ENCODE measurements at regions of chr2 and their contacts with region 1.

Region 1: GRCh38 chr2:230225486-230225885 is at the start of gene SP140:
- DNase-seq: peak; percentile 80
- H3K4me3 Mint-ChIP-seq: peak within 1 kb of the TSS; percentile 91
- H3K27ac Mint-ChIP-seq: peak within 1 kb of the TSS; percentile 98
- H3K4me1 Mint-ChIP-seq: peaks cover 63% of the 10 kb centered on the region
- H3K27me3 Mint-ChIP-seq: no peaks in the 10 kb centered on the region
- total RNA-seq, gene SP140: 235 and 243 TPM in 2 replicates

Region 2: DNA sequence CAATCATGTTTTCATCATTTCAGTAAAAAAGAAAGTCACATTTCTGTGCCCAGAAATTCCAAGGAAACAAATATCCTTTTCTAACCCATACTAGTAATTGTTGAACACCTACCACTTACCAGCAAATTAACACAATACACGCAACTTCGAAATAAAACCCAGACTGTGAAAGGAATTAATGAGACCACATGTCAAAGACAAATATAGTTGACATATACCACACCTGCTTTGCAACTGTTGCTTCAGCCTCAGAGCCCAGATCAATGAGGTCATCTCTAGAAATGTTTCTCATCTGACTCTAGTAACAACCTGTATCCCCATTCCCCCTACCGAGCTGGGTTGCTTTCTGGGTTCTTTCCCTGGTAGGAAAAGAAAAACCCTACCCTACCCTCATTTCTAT is 356.3 kb before region 1 on chr2:
- intact Hi-C with region 1: no loop called
- DNase-seq: no peak
- H3K4me3 Mint-ChIP-seq: no peak overlapping the region
- H3K27ac Mint-ChIP-seq: no peak overlapping the region
- H3K4me1 Mint-ChIP-seq: peaks cover 42% of the 10 kb centered on the region
- H3K27me3 Mint-ChIP-seq: no peaks in the 10 kb centered on the region

Region 3: GRCh38 chr2:230202430-230203109 is 22.9 kb before region 1 on chr2:
- intact Hi-C with region 1: no loop called
- DNase-seq: no peak
- H3K4me3 Mint-ChIP-seq: no peak overlapping the region
- H3K27ac Mint-ChIP-seq: peak overlapping the region; percentile 15
- H3K4me1 Mint-ChIP-seq: peaks cover 29% of the 10 kb centered on the region
- H3K27me3 Mint-ChIP-seq: no peaks in the 10 kb centered on the region

Region 4: GRCh38 chr2:230244211-230244610 is 18.7 kb after region 1 on chr2:
- intact Hi-C with region 1: no loop called
- DNase-seq: no peak
- H3K4me3 Mint-ChIP-seq: no peak overlapping the region
- H3K27ac Mint-ChIP-seq: no peak overlapping the region
- H3K4me1 Mint-ChIP-seq: peaks cover 7% of the 10 kb centered on the region
- H3K27me3 Mint-ChIP-seq: no peaks in the 10 kb centered on the region

Region 5: DNA sequence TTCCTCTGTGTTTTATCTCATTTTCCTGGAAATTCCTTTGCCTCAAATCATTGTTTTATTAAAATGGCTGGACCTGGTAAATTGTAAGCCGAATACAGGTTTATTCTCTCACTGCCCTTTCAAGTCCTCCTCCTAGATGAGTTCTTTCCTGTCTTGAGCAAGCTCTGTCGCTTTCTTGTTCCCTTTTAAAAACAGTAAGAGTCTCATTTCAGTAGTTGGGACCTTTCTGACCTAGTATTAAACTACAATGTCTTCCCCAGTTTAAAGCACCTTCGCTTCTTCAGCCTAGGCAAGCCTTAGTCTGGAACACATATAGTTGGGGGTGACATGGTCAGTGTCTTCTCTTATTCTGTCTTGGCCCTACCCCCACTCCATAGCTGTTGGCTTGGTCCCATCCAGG is 60.6 kb after region 1 on chr2:
- intact Hi-C with region 1: loop called (anchors 2 kb)
- DNase-seq: no peak
- H3K4me3 Mint-ChIP-seq: no peak overlapping the region
- H3K27ac Mint-ChIP-seq: peak overlapping the region; percentile 6
- H3K4me1 Mint-ChIP-seq: peaks cover 35% of the 10 kb centered on the region
- H3K27me3 Mint-ChIP-seq: no peaks in the 10 kb centered on the region

Region 6: DNA sequence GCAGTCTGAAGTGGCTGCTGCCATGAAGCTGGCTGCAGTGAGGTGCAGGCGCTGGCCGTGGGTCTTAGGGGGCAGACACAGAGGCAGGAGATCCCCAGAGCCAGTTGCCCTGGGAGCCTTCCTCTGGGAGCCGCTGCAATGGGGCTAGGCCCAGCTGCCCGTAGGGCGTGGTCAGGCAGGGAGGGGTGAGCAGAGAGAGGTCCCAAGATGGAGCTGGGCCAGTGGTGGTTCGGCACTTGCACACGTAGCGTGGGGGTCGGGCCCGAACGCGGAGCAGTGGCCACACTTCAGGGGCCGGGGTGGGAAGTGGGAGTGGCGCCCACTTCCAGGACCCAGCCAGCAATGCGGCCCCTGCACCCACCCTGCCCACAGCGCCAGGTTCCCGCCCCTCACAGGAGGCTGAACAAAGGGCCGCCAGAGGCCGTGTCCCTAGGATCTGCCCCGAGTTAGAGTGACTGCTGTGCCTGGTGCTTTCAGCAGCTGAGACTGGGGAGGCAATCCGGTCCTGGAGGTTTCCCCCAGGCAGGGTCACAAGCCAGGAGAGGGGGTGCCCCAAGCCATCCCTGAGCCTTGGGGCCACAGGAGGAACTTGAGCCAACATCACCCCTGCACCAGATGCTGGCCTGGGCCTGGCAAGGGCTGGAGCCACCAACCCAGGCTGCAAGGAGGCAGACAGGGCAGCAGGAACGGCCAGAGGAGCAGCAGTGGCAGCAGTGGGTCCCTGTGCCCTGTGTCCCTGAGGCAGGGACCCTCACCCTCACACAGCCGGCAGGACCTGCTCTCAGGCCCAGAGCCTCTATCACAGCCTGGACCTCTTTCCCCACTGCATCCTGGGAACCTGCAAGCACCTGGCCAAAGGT is 80.2 kb after region 1 on chr2:
- intact Hi-C with region 1: no loop called
- DNase-seq: no peak
- H3K4me3 Mint-ChIP-seq: no peak overlapping the region
- H3K27ac Mint-ChIP-seq: no peak overlapping the region
- H3K4me1 Mint-ChIP-seq: peaks cover 14% of the 10 kb centered on the region
- H3K27me3 Mint-ChIP-seq: no peaks in the 10 kb centered on the region

Measured in activated T-helper 1 cell treated with anti-CD3 and anti-CD28 coated beads, Interleukin-12 subunit alpha, Interleukin-12 subunit beta, Interleukin-2, Interleukin-4 antibody, amounts not matched to agents 30 ng/mL and 10 ng/mL and 1 ng/mL, durations not matched to agents 14 hours and 24 hours and 36 hours (primary cell).